IMR-90 (cell line): ENCODE measurements at regions of chr4 and their contacts with region 1.

Region 1: DNA sequence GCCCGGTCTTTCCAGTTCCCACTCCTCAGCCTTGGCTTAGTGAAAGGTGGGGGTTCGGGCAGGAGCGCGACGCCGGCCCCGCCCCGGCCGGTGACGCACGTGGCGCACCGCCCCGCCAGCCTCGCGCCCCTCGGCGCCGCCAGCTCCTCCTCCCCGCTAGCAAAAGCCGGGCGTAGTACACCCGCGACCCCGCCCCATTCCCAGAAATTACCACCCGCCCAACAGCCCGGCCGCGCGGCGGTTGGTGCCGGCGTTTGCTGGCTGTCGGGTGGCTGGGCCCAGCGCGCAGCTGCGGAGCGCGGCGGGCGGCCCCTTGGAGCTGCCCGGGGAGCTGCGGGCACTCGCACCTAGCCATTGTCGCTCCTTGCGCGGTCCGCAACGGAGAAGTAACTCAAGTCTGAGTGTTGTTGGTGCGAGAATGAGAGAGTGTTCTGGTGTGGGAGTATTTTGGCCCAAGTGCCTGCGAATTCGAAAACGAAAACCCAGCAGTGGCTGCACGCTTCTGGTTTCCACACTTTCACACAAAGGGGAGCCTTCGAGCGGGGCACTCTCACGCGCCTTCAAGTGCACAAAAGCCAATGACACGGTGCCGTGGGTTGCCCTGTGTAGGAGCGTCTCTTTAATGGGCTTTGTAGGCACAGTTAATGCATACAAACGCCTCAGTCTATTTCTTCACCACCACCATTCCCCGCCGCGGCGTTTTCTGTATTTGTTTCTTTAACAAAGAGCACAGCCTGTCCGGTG is 1.0 kb upstream of the ELF2 start:
- DNase-seq: peak; percentile 91
- ATAC-seq: peak; percentile 78
- H3K4me3 ChIP-seq: peak overlapping the region; percentile 88
- H3K27ac ChIP-seq: peak overlapping the region; percentile 75
- H3K4me1 ChIP-seq: peaks cover 2% of the 10 kb centered on the region; the same call in 1 of the 2 replicates
- H3K27me3 ChIP-seq: no peaks in the 10 kb centered on the region
- CTCF ChIP-seq: no peak
- POLR2A ChIP-seq: peak; percentile 60; the same call in 1 of the 2 replicates
- RAD21 ChIP-seq: peak; percentile 5; the same call in 1 of the 2 replicates

Region 2: GRCh38 chr4:139030614-139031235 is 147.3 kb before region 1 on chr4:
- CTCF ChIA-PET with region 1: interaction called, 3 read pairs
- POLR2A ChIA-PET with region 1: no interaction called
- dilution Hi-C with region 1: no loop called
- in situ Hi-C with region 1: no loop called
- intact Hi-C with region 1: loop called (anchors 5 kb)
- DNase-seq: peak; percentile 83
- ATAC-seq: peak; percentile 51
- H3K4me3 ChIP-seq: no peak overlapping the region
- H3K27ac ChIP-seq: no peak overlapping the region
- H3K4me1 ChIP-seq: peaks cover 9% of the 10 kb centered on the region
- H3K27me3 ChIP-seq: no peaks in the 10 kb centered on the region
- CTCF ChIP-seq: peak; percentile 89
- POLR2A ChIP-seq: 0 out of 2 replicates have a peak, but pooled peaks have one; percentile 33
- RAD21 ChIP-seq: peak; percentile 85

Region 3: DNA sequence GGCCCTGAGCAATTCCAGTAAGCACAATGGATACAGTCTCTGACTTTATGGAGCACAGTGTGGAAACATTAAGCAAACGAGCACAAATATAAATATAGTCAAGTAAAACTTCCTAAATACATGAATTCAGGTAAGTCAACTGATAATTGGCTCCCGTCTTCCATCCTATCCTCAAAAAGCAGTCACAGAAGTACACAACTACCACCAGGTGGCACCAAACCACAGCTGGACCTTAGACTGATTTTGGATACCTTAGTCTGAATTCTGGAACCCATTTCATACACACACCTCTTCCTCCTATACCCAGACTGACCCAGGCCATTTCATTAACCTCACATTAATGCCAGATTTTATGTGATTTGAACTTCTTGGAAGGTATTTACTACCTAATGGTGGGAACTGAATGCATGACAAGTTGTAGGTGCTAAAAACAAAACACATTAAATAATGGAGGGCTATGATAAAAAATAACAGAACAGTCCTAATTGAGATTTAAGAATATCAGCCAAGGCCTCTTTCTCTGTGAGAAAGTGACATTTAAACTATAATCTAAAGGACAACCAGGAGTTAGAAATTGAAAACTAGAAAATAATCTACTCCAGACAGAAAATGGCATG is 78.6 kb before region 1 on chr4:
- CTCF ChIA-PET with region 1: interaction called, 8 read pairs
- POLR2A ChIA-PET with region 1: no interaction called
- dilution Hi-C with region 1: no loop called
- in situ Hi-C with region 1: no loop called
- intact Hi-C with region 1: loop called (anchors 2 kb)
- DNase-seq: peak; percentile 86
- ATAC-seq: peak; percentile 79; the same call in 1 of the 2 replicates
- H3K4me3 ChIP-seq: no peak overlapping the region
- H3K27ac ChIP-seq: no peak overlapping the region
- H3K4me1 ChIP-seq: no peaks in the 10 kb centered on the region
- H3K27me3 ChIP-seq: no peaks in the 10 kb centered on the region
- CTCF ChIP-seq: peak; percentile 85
- POLR2A ChIP-seq: 0 out of 2 replicates have a peak, but pooled peaks have one; percentile 23
- RAD21 ChIP-seq: peak; percentile 93

Region 4: GRCh38 chr4:139279760-139280620 is 102.0 kb after region 1 on chr4 and contains the start of gene MGARP:
- CTCF ChIA-PET with region 1: no interaction called
- POLR2A ChIA-PET with region 1: no interaction called
- dilution Hi-C with region 1: no loop called
- in situ Hi-C with region 1: no loop called
- intact Hi-C with region 1: loop called (anchors 5 kb)
- DNase-seq: peak; percentile 30
- ATAC-seq: peak; percentile 86
- H3K4me3 ChIP-seq: peak within 1 kb of the TSS; percentile 60
- H3K27ac ChIP-seq: peak within 1 kb of the TSS; percentile 33
- H3K4me1 ChIP-seq: peaks cover 3% of the 10 kb centered on the region
- H3K27me3 ChIP-seq: no peaks in the 10 kb centered on the region
- CTCF ChIP-seq: no peak
- POLR2A ChIP-seq: no peak
- RAD21 ChIP-seq: no peak
- total RNA-seq, gene MGARP: 35.0 and 44.4 TPM in 2 replicates

Region 5: DNA sequence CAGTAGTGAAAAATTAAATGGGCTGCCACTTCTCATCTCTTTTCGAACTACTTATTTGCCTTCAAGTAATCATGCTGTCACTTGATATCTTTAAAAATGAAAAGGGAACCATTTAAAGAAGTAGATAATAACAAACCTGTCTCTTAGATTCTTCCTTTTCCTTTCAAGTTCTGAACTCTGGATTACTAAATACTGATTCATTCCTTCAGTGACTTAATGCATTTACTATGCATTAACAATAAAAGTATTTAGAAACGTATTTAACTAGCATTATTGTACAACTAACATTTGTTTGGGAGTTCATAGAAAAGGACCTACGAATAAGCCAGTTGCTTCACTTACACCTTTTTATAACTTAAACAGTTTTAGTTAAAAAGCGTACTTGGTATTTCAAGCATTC is 214.8 kb after region 1 on chr4:
- CTCF ChIA-PET with region 1: no interaction called
- POLR2A ChIA-PET with region 1: no interaction called
- dilution Hi-C with region 1: no loop called
- in situ Hi-C with region 1: no loop called
- intact Hi-C with region 1: no loop called
- DNase-seq: peak; percentile 56
- ATAC-seq: peak; percentile 54
- H3K4me3 ChIP-seq: no peak overlapping the region
- H3K27ac ChIP-seq: no peak overlapping the region
- H3K4me1 ChIP-seq: no peaks in the 10 kb centered on the region
- H3K27me3 ChIP-seq: no peaks in the 10 kb centered on the region
- CTCF ChIP-seq: no peak
- POLR2A ChIP-seq: no peak
- RAD21 ChIP-seq: no peak

Region 6: DNA sequence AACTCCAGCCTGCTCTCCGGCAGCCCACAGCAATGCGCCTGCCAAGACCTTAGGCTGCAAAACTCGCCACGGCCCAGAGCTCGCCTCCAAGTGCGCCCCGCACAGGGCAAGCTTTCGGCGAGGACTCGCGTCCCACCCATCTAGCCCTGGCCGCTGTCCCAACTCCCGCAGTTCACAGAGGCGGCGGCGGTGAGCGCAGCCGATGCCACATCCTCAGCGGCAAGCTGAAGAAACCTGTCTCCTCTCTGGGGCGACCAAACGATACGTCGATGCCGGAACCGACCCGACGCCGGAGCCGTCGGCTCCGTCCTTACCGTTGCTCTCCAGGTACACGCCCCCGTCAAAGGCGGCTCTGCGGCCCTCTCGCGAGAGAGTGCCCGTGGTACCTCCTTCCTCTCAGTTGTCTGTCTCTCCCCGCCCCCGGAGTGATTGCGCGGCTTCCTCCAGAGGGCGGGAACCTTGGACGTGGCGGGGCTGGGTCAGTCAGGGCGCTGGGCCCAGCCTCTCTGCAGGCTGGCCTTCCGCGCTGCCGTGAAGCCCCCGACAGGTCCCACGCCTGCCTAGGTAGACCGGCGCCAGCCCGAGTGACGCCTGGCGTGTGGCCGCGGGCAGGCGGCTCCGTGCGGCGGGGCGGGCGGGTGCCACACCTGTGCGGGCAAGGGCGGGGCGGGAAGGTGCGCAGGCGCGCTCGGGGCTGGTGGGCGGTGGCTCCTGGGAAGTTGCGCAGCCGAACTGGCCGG is 275.5 kb after region 1 on chr4:
- CTCF ChIA-PET with region 1: no interaction called
- POLR2A ChIA-PET with region 1: no interaction called
- dilution Hi-C with region 1: no loop called
- in situ Hi-C with region 1: no loop called
- intact Hi-C with region 1: loop called (anchors 5 kb)
- DNase-seq: peak; percentile 97
- ATAC-seq: peak; percentile 94
- H3K4me3 ChIP-seq: peak overlapping the region; percentile 86
- H3K27ac ChIP-seq: peak overlapping the region; percentile 94
- H3K4me1 ChIP-seq: peaks cover 3% of the 10 kb centered on the region
- H3K27me3 ChIP-seq: no peaks in the 10 kb centered on the region
- CTCF ChIP-seq: no peak
- POLR2A ChIP-seq: peak; percentile 94
- RAD21 ChIP-seq: no peak